ENCODE measurements at regions of chr1 and their contacts with region 1.

Region 1: DNA sequence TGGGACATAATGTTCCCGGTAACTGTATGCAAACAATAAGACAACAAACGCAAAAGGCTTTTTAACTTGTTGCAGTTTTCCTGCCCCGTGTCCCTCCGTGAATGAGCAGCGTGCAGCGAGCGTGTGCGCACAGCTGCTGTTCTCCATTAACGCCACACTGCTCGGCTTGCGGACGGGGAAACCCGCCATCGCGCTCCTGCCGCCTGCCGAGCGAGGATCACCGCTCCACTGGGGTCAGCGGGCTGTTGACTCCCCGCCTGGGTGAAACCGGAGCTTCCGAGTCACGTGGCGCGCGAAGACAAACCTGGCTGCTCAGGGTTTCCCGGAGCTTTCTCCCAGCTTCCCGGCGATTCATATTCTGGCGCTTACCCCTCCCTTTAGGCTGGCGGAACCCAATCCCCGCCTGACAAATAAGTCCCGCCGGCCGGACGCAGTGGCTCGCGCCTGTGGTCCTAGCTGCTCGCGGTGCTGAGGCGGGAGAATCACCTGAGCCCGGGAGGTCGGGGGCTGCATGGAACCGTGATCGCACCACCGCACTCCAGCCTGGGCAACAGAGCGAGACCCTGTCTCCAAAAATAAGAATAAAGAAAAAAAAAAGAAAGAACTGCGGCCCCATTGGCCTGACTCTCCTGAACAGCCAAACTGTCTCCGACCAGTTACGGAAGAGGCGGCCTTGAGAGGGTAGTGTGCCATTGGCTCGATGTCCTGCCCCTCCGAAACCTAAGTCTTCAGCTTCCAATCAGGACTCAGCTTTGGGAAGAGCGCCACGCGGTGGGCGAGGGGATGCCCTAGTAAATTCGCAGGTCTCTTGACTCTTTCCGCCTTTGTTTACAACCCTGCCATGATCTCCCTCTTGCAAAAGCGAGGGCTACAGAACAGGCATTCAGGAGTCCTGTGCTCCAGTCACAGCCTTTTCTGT is at the start of gene CREB3L4:
- DNase-seq: peak; percentile 95 to 97
- H3K4me3 ChIP-seq: peak within 1 kb of the TSS; percentile 47
- H3K4me3 Mint-ChIP-seq: peak within 1 kb of the TSS; percentile 81
- H3K27ac Mint-ChIP-seq: peak within 1 kb of the TSS; percentile 99
- H3K4me1 ChIP-seq: peaks cover 9% of the 10 kb centered on the region; the same call in 1 of the 2 replicates
- H3K4me1 Mint-ChIP-seq: peaks cover 12% of the 10 kb centered on the region
- H3K27me3 ChIP-seq: no peaks in the 10 kb centered on the region
- H3K27me3 Mint-ChIP-seq: no peaks in the 10 kb centered on the region
- CTCF ChIP-seq: peak; percentile 42 to 49
- total RNA-seq, gene CREB3L4: 9.0 and 9.8 TPM in 2 replicates

Region 2: GRCh38 chr1:153775458-153776327 is 191.6 kb before region 1 on chr1:
- CTCF ChIA-PET with region 1: interaction called, 3 read pairs
- POLR2A ChIA-PET with region 1: interaction called, 11 read pairs
- intact Hi-C with region 1: no loop called
- DNase-seq: peak; percentile 86 to 87
- H3K4me3 ChIP-seq: peak overlapping the region; percentile 55
- H3K4me3 Mint-ChIP-seq: peak overlapping the region; percentile 82
- H3K27ac Mint-ChIP-seq: peak overlapping the region; percentile 59
- H3K4me1 ChIP-seq: peaks cover 11% of the 10 kb centered on the region
- H3K4me1 Mint-ChIP-seq: no peaks in the 10 kb centered on the region
- H3K27me3 ChIP-seq: no peaks in the 10 kb centered on the region
- H3K27me3 Mint-ChIP-seq: no peaks in the 10 kb centered on the region
- CTCF ChIP-seq: no peak

Region 3: DNA sequence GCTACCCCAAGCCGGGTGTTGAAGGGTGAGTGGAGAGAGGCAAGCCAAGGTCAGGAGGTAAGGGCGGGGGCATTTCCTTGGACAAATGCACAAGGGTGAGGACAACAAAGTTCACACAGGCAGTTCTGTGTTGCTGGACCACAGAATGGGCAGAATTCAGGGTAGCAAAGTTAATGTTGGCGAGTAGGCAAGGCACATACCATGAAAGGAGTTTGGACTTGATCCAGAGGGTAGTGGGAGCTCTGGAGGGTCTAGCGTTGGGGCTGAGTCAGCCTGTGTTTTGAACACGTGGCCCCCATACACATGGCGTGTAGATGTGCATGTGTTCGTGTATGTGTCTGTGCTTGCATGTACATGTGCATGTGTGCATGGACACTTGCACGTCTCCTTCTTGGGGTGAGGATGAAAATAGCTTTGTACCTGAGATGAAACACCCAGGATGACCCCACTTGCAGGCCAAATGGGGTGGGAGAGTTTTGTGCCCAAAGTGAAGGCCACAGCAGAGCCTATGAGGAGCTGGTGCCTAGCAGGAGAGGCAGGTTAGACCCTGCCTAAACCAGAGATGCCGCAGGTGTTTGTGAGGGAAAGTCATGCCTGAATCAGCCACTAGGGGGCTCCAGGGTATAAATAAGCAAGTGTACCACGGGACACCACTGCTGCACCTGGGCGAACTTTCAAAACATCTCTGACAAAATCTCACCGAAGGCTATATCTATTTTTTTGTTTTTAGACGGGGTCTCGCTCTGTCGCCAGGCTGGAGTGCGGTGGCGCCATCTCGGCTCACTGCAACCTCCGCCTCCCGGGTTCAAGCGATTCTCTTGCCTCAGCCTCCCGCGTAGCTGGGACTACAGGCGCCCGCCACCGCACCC is 170.3 kb before region 1 on chr1:
- CTCF ChIA-PET with region 1: no interaction called
- POLR2A ChIA-PET with region 1: no interaction called
- intact Hi-C with region 1: loop called (anchors 1 kb)
- DNase-seq: peak; percentile 80 to 82
- H3K4me3 ChIP-seq: no peak overlapping the region
- H3K4me3 Mint-ChIP-seq: no peak overlapping the region
- H3K27ac Mint-ChIP-seq: no peak overlapping the region
- H3K4me1 ChIP-seq: no peaks in the 10 kb centered on the region
- H3K4me1 Mint-ChIP-seq: no peaks in the 10 kb centered on the region
- H3K27me3 ChIP-seq: no peaks in the 10 kb centered on the region
- H3K27me3 Mint-ChIP-seq: no peaks in the 10 kb centered on the region
- CTCF ChIP-seq: peak; percentile 76 to 93

Region 4: GRCh38 chr1:153922972-153923925 is 44.1 kb before region 1 on chr1 and contains the start of gene GATAD2B:
- CTCF ChIA-PET with region 1: interaction called, 4 read pairs
- POLR2A ChIA-PET with region 1: interaction called, 20 read pairs
- intact Hi-C with region 1: loop called (anchors 2 kb)
- DNase-seq: peak; percentile 99 to 100
- H3K4me3 ChIP-seq: peak within 1 kb of the TSS; percentile 65
- H3K4me3 Mint-ChIP-seq: peak within 1 kb of the TSS; percentile 71
- H3K27ac Mint-ChIP-seq: peak within 1 kb of the TSS; percentile 86
- H3K4me1 ChIP-seq: peaks cover 16% of the 10 kb centered on the region
- H3K4me1 Mint-ChIP-seq: peaks cover 15% of the 10 kb centered on the region
- H3K27me3 ChIP-seq: no peaks in the 10 kb centered on the region
- H3K27me3 Mint-ChIP-seq: no peaks in the 10 kb centered on the region
- CTCF ChIP-seq: no peak
- total RNA-seq, gene GATAD2B: 38.0 and 42.6 TPM in 2 replicates

Region 5: GRCh38 chr1:153946622-153947241 is 20.6 kb before region 1 on chr1 and contains the start of gene DENND4B:
- CTCF ChIA-PET with region 1: interaction called, 14 read pairs
- POLR2A ChIA-PET with region 1: interaction called, 20 read pairs
- intact Hi-C with region 1: no loop called
- DNase-seq: peak; percentile 85 to 92
- H3K4me3 ChIP-seq: peak within 1 kb of the TSS; percentile 92
- H3K4me3 Mint-ChIP-seq: peak within 1 kb of the TSS; percentile 82
- H3K27ac Mint-ChIP-seq: peak within 1 kb of the TSS; percentile 57
- H3K4me1 ChIP-seq: peaks cover 8% of the 10 kb centered on the region
- H3K4me1 Mint-ChIP-seq: peaks cover 7% of the 10 kb centered on the region
- H3K27me3 ChIP-seq: no peaks in the 10 kb centered on the region
- H3K27me3 Mint-ChIP-seq: no peaks in the 10 kb centered on the region
- CTCF ChIP-seq: peak; percentile 95 to 97
- total RNA-seq, gene DENND4B: 78.2 and 79.0 TPM in 2 replicates

Region 6: GRCh38 chr1:153977250-153978240 is 10.2 kb after region 1 on chr1 and contains the start of gene JTB:
- CTCF ChIA-PET with region 1: interaction called, 13 read pairs
- POLR2A ChIA-PET with region 1: interaction called, 105 read pairs
- intact Hi-C with region 1: loop called (anchors 1 kb)
- DNase-seq: peak; percentile 86
- H3K4me3 ChIP-seq: peak within 1 kb of the TSS; percentile 84
- H3K4me3 Mint-ChIP-seq: peak within 1 kb of the TSS; percentile 95
- H3K27ac Mint-ChIP-seq: peak within 1 kb of the TSS; percentile 92
- H3K4me1 ChIP-seq: peaks cover 8% of the 10 kb centered on the region
- H3K4me1 Mint-ChIP-seq: peaks cover 6% of the 10 kb centered on the region
- H3K27me3 ChIP-seq: no peaks in the 10 kb centered on the region
- H3K27me3 Mint-ChIP-seq: no peaks in the 10 kb centered on the region
- CTCF ChIP-seq: no peak
- total RNA-seq, gene JTB: 123 and 124 TPM in 2 replicates

Region 7: DNA sequence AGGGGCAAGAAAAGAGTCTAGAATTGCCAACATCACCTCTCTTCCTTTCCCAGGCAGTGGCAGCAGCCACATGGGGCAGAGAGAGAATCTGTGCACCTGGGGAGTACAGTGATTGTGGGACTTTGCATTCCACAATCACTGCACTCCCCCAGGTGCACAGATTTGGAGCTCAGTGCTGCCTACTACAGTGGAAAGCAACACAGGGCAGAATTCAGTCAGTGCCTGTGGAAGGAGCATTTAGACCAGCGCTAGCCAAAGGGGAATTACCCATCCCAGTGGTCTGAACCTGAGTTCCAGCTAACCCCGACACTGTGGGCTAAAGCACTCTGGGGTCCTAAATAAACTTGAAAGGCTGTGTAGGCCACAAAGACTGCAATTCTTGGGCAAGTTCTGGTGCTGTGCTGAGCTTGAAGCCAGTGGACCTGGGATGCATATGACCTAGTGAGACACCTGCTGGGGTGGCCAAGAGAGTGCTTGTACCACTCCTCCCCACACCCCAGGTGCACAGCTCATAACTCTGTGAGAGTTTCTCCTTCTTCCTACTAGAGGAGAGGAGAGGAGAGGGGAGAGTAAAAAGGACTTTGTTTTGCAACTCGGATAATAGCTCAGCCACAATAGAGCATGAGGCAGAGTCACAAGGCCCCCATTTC is 137.2 kb after region 1 on chr1:
- CTCF ChIA-PET with region 1: interaction called, 9 read pairs
- POLR2A ChIA-PET with region 1: no interaction called
- intact Hi-C with region 1: loop called (anchors 1 kb)
- DNase-seq: peak; percentile 39 to 52
- H3K4me3 ChIP-seq: no peak overlapping the region
- H3K4me3 Mint-ChIP-seq: no peak overlapping the region
- H3K27ac Mint-ChIP-seq: no peak overlapping the region
- H3K4me1 ChIP-seq: peaks cover 10% of the 10 kb centered on the region; the same call in 1 of the 2 replicates
- H3K4me1 Mint-ChIP-seq: no peaks in the 10 kb centered on the region
- H3K27me3 ChIP-seq: no peaks in the 10 kb centered on the region
- H3K27me3 Mint-ChIP-seq: no peaks in the 10 kb centered on the region
- CTCF ChIP-seq: peak; percentile 35 to 37